ENCODE measurements at regions of chr18 and their contacts with region 1.

Region 1: GRCh38 chr18:34773961-34774766 is 64.1 kb downstream of the DTNA start:
- DNase-seq: no peak

Region 2: DNA sequence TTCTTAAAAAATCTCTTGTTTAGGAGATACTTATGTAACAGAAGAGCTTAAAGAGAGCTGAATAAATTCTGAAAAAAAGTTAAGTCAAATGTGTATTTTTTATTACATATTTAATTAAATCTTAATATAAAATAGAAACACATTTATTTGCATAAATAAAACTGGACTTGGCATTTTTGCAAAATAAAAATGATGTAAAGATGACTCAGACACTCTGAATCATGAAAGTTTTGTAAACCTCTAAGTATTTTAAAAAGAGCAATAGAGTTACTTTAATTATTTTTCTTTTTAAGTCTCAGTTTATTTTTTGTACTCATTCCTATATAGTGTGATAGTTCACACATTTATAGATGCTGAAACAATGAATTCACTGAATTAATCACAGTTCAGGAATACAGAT is 174.0 kb before region 1 on chr18:
- intact Hi-C with region 1: loop called (anchors 10 kb)
- DNase-seq: no peak

Region 3: GRCh38 chr18:34729740-34730355 is 44.3 kb before region 1 on chr18:
- intact Hi-C with region 1: loop called (anchors 5 kb)
- DNase-seq: no peak

Region 4: DNA sequence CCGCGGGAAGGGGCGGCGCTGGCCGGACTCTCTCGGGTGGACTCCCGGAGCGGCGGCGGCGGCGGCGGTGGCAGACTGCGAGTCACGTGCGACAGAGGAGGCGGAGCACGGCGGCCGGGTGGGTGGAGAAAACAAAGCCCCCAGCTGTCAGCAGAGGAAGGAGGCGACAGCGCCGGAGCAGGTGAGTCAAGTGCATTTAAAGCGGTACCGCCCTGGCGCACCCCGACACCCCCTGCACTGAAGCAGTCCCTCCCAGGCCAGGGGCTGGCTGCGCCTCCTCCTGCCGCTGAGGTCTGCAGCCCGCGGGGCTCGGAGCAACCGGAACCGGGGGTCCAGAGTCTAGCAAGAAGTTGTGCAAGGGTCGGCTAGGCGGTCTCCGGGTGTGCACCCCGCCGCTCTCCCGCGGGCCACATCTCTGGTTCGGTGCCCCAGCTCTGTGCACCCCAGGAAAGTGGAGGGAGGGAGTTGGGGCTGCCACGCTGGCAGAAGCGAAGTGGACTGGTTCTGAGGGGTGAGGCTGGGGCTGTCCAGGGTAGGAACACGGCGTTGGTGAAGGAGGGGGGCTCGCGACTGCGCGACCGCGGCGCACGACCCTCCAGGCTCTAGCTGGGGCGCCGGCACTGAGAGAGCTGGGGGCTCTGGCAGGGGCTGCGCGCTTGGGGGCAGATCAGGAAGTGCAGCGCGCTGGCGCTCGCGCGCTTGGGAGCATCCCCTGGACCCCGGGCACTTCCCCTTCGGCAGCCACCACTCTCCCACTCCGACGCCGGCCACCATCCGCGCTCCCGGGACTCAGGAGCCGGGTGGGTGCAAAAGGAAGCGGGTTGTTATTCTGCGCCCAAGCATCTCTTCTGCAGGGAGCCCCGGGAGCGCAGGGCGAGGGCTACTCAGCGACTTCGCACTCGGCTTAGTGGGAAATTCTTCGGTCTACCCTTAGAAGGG is 203.0 kb after region 1 on chr18:
- intact Hi-C with region 1: no loop called
- DNase-seq: peak; percentile 92

Measured in cardiac septum (tissue), 1 donor.